ENCODE measurements at regions of chr2 and their contacts with region 1.

Region 1: DNA sequence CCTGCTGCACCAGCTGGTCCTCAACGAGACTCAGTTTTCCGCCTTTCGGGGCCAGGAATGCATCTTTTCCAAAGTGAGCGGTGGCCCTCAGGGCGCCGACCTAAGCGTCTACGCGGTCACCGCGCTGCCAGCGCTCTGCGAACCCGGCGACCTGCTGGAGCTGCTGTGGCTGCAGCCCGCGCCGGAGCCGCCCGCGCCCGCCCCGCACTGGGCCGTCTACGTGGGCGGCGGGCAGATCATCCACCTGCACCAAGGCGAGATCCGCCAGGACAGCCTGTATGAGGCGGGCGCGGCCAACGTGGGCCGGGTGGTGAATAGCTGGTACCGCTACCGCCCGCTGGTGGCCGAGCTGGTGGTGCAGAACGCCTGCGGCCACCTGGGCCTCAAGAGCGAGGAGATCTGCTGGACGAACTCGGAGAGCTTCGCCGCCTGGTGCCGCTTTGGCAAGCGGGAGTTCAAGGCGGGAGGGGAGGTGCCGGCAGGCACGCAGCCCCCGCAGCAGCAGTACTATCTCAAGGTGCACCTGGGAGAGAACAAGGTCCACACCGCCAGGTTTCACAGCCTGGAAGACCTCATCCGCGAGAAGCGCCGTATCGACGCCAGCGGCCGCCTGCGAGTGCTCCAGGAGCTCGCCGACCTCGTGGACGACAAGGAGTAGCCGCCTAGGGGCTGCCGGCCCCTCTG is 1.8 kb downstream of the LRATD1 start:
- DNase-seq: peak; percentile 86
- H3K4me3 ChIP-seq: peak overlapping the region; percentile 59 to 83 (median 66)
- H3K27ac ChIP-seq: peak overlapping the region; percentile 50
- H3K4me1 ChIP-seq: peaks cover 46% of the 10 kb centered on the region
- H3K27me3 ChIP-seq: no peaks in the 10 kb centered on the region
- CTCF ChIP-seq: peak; percentile 66 to 90

Region 2: GRCh38 chr2:14288016-14288415 is 346.3 kb before region 1 on chr2:
- CTCF ChIA-PET with region 1: interaction called, 5 read pairs
- dilution Hi-C with region 1: no loop called
- in situ Hi-C with region 1: loop called (anchors 5 to 25 kb)
- intact Hi-C with region 1: loop called (anchors 1 kb)
- DNase-seq: peak; percentile 98
- H3K4me3 ChIP-seq: no peak overlapping the region
- H3K27ac ChIP-seq: peak overlapping the region; percentile 42
- H3K4me1 ChIP-seq: peaks cover 16% of the 10 kb centered on the region
- H3K27me3 ChIP-seq: no peaks in the 10 kb centered on the region
- CTCF ChIP-seq: peak; percentile 73 to 75

Region 3: GRCh38 chr2:14451312-14451711 is 183.0 kb before region 1 on chr2:
- CTCF ChIA-PET with region 1: no interaction called
- dilution Hi-C with region 1: no loop called
- in situ Hi-C with region 1: no loop called
- intact Hi-C with region 1: loop called (anchors 10 kb)
- DNase-seq: no peak
- H3K4me3 ChIP-seq: no peak overlapping the region
- H3K27ac ChIP-seq: no peak overlapping the region
- H3K4me1 ChIP-seq: no peaks in the 10 kb centered on the region
- H3K27me3 ChIP-seq: no peaks in the 10 kb centered on the region
- CTCF ChIP-seq: peak; percentile 13 to 43

Region 4: DNA sequence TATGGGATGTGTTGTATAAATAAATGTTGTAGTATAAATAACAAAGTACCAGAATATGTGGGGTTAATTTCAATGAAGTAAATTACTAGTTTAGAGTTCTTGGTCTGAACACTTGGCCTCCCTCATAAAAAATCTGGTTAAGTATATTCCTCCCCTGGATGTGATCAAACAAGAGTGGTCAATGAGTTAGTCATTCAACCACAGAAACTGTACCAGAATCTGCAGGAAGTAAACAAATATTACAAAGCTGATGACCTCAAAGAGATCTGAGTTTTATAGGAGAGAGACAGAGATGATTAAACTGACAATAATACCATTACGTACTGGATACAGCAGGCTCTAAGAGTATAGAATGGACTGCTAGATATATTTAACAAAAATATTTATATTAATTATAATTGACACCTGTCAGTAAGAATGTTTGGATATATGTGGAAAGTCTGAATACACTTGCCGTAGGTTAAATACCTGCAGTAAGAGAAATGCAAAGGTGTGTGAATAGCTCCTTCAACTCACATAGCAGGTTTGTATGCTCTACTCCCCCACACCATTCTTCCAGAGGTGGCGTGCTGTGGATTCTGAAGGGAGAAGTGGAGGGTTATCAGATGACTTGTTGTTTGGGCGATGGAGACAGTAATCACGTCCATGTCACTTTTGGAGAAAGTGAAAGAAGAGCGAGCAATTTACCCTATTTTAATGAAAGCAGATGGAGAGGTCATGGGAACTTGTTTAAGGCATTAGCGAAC is 110.1 kb before region 1 on chr2:
- CTCF ChIA-PET with region 1: no interaction called
- dilution Hi-C with region 1: no loop called
- in situ Hi-C with region 1: no loop called
- intact Hi-C with region 1: loop called (anchors 1 kb)
- DNase-seq: peak; percentile 94
- H3K4me3 ChIP-seq: no peak overlapping the region
- H3K27ac ChIP-seq: peak overlapping the region; percentile 86
- H3K4me1 ChIP-seq: peaks cover 14% of the 10 kb centered on the region
- H3K27me3 ChIP-seq: no peaks in the 10 kb centered on the region
- CTCF ChIP-seq: no peak

Region 5: DNA sequence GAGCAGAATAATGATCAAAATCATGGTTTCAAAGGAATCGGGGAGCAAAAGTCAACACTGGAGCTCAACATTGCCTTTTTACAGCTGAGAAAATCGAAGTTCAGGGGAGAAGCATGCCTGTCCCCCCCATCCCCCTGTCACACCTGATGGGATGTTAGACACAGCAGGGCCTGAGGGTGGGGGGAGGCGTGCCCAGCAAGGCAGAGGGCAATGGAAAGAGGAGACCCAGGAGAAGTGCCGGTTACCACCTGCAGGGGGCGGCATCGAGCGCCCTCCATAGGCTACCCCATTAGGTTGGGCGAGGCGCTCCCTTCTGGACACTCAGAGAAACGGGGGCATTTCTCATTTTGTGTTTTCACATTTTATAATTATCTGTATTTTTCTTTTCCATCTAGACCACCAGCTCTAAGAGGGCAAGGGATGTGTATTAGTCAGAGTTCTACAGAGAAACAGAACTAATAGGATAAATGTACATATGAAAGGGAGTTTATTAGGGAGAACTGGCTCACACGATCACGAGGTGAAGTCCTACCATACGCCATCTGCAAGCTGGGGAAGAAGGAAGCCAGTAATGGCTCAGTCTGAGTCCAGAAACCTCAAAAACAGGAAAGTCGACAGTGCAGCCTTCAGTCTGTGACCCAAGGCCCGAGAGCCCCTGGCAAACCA is 269.5 kb after region 1 on chr2:
- CTCF ChIA-PET with region 1: no interaction called
- dilution Hi-C with region 1: no loop called
- in situ Hi-C with region 1: no loop called
- intact Hi-C with region 1: loop called (anchors 2 kb)
- DNase-seq: peak; percentile 41
- H3K4me3 ChIP-seq: no peak overlapping the region
- H3K27ac ChIP-seq: no peak overlapping the region
- H3K4me1 ChIP-seq: no peaks in the 10 kb centered on the region
- H3K27me3 ChIP-seq: no peaks in the 10 kb centered on the region
- CTCF ChIP-seq: peak; percentile 66 to 67